Activated T-helper 1 cell treated with anti-CD3 and anti-CD28 coated beads, Interleukin-12 subunit alpha, Interleukin-12 subunit beta, Interleukin-2, Interleukin-4 antibody, amounts not matched to agents 30 ng/mL and 10 ng/mL and 1 ng/mL, durations not matched to agents 14 hours and 24 hours and 36 hours (primary cell): ENCODE measurements at regions of chr1 and their contacts with region 1.

Region 1: GRCh38 chr1:182845379-182845778 is 6.2 kb downstream of the DHX9 start:
- DNase-seq: no peak
- H3K4me3 Mint-ChIP-seq: peak overlapping the region; percentile 54
- H3K27ac Mint-ChIP-seq: peak overlapping the region; percentile 85
- H3K4me1 Mint-ChIP-seq: peaks cover 90% of the 10 kb centered on the region
- H3K27me3 Mint-ChIP-seq: no peaks in the 10 kb centered on the region

Region 2: DNA sequence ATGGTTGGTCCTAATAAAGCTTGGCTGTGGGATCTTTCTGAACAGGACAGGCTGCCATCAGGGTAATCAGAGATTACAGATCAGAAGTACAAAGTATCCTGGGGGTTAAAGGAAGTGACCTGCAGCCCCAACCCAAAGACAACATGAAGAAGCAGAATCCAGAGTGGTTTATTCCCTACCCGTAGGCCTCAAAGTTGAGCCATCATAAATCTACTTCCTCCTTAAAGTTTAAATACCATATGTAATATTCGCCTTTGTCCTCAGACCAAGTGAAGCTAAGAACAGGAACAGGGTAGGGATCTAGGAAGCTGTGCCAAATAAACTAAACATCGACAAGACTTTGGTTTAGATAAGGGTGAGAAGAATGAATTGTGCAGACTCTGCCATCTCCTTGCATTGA is 22.2 kb before region 1 on chr1:
- intact Hi-C with region 1: no loop called
- DNase-seq: no peak
- H3K4me3 Mint-ChIP-seq: no peak overlapping the region
- H3K27ac Mint-ChIP-seq: no peak overlapping the region
- H3K4me1 Mint-ChIP-seq: no peaks in the 10 kb centered on the region
- H3K27me3 Mint-ChIP-seq: peaks cover 6% of the 10 kb centered on the region

Region 3: DNA sequence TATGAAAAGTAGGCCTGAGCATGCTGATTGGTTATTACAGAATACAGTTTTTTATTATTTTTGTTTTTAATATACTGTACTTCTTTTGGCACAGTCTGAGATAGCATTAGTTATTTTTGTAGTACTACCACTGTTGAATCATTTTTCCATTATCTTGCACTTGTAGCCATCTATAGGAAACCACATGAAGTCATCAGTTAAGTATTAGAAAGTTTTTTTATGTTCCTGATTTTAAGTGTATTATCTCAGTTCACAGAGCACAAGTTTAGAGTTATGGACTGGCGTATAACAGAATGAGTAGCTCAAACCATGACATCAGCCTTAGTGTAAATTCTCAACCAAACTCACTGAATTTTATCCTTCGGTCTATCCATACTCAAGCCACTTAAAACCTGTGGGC is 16.6 kb after region 1 on chr1:
- intact Hi-C with region 1: loop called (anchors 1 kb)
- DNase-seq: no peak
- H3K4me3 Mint-ChIP-seq: no peak overlapping the region
- H3K27ac Mint-ChIP-seq: peak overlapping the region; percentile 24
- H3K4me1 Mint-ChIP-seq: peaks cover 35% of the 10 kb centered on the region
- H3K27me3 Mint-ChIP-seq: no peaks in the 10 kb centered on the region

Region 4: GRCh38 chr1:182877842-182878241 is 32.5 kb after region 1 on chr1:
- intact Hi-C with region 1: loop called (anchors 2 kb)
- DNase-seq: no peak
- H3K4me3 Mint-ChIP-seq: no peak overlapping the region
- H3K27ac Mint-ChIP-seq: peak overlapping the region; percentile 66
- H3K4me1 Mint-ChIP-seq: peaks cover 34% of the 10 kb centered on the region
- H3K27me3 Mint-ChIP-seq: no peaks in the 10 kb centered on the region

Region 5: DNA sequence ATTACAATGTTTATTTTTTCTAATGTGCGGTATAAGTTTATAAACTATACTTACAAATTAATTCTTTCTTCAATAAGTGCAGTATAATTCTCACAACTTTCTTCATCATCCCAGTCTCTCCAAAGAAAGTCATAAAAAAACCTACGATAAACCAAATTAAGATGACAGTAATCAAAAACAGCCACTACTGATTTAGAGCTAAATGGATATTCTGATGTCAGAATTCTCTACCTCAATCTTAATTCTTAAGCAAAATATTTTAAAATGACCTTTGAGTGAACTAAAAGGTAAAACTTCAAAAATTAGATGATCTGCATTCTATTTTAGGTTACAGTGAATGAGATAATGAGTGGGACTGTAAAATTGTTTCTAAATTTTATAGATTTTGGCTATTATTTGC is 94.0 kb after region 1 on chr1:
- intact Hi-C with region 1: no loop called
- DNase-seq: no peak
- H3K4me3 Mint-ChIP-seq: no peak overlapping the region
- H3K27ac Mint-ChIP-seq: no peak overlapping the region
- H3K4me1 Mint-ChIP-seq: peaks cover 5% of the 10 kb centered on the region
- H3K27me3 Mint-ChIP-seq: peaks cover 42% of the 10 kb centered on the region